GM10248 (cell line): ENCODE measurements at regions of chr7 and their contacts with region 1.

Region 1: DNA sequence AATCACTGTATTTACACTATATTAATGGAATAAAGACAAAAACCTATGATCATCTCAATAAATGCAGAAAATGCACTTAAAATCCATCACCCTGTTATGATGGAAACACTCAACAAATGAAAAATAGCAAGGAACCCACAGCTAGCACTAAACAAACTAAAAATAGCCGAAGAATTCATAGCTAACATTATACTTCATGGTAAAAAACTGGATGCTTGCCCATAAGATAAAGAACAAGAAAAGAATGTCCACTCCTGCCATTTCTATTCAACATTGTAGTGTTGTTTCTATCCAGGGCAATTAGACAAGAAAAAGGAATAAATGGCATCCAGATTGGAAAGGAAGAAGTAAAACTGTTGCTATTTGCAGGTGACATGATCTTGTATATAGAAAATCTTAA is 142.1 kb downstream of the STK31 start:
- DNase-seq: no peak
- CTCF ChIP-seq: no peak

Region 2: DNA sequence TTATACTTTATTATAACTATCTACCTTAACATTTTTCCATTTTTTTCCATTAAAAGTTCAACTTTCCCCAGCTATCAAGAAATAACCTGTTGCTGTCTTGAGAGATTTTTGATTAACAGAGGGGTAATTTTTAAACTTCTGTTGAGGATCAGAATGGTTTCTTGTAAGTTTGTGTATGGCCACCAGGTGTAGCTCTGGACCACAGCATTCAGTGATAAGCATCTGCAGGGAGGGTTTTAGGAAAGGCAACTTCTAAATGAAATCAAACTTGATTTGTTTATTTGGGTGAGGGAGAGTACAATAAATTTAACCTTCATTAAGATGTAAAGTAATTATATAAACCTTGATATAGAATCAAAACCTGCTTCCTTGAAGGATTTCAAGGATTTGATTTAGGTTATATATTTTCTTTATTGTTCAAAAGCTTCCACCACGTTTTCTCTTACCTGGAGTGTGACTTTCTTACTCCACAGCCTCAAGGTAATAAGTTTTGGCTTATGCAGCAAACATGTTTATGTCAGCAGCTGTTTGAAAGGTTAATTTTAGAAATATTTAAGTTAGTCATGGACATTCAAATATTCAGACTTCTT is 11.2 kb after region 1 on chr7:
- CTCF ChIA-PET with region 1: interaction called, 12 read pairs
- POLR2A ChIA-PET with region 1: no interaction called
- DNase-seq: no peak
- CTCF ChIP-seq: peak; percentile 28

Region 3: GRCh38 chr7:23873306-23873705 is 21.2 kb after region 1 on chr7:
- CTCF ChIA-PET with region 1: no interaction called
- POLR2A ChIA-PET with region 1: no interaction called
- DNase-seq: no peak
- CTCF ChIP-seq: no peak